Activated naive CD4-positive, alpha-beta T cell treated with anti-CD3 and anti-CD28 coated beads, Interleukin-2, amount 10 ng/mL, durations not matched to agents 7 days and 5 days (primary cell): ENCODE measurements at regions of chr1 and their contacts with region 1.

Region 1: DNA sequence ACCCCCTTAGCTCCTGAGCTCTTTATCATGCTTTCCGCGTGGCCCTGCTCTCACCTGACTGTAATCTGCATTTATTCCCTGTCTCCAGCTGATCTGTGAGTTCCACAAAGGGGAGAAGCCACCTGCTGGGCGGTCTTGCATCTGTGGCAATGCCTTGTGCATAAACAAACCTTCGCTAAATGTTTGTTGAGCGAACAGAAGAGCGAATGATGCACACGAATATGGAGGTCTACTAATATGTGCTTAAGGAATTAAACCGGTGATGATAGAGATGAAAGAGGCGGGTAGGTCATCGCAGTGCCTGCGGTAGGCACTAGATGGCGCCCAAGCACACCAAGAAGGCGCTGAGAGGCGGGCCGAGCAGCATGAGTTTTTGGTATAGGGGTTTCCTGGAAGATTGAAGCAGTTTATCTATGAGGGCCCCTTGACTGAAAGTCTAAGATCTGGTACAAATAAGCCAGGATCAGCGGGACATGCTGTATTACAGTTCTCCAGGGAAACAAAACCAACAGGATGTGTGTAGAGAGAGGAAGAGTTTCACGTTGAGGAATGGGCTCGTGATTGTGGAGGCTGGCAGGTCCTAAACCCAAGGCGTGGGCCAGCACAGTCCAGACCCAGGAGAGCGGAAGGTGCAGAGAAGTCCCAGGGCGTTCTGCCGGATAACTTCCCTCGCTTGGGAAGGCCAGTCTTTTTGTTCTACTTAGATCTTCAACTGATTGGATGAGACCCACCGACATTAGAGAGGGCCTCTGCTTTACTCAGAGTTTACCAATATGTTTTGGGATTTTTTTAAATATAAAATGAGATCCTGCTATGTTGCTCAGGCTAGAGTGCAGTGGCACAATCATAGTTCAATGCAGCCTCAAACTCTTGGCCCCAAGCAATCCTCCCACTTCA is 34.7 kb downstream of the TOMM20 start:
- DNase-seq: peak; percentile 88
- H3K4me3 Mint-ChIP-seq: no peak overlapping the region
- H3K27ac Mint-ChIP-seq: no peak overlapping the region
- H3K4me1 Mint-ChIP-seq: peaks cover 7% of the 10 kb centered on the region
- H3K27me3 Mint-ChIP-seq: peaks cover 39% of the 10 kb centered on the region

Region 2: GRCh38 chr1:234656856-234657654 is 436.9 kb before region 1 on chr1:
- CTCF ChIA-PET with region 1: no interaction called
- DNase-seq: no peak
- H3K4me3 Mint-ChIP-seq: no peak overlapping the region
- H3K27ac Mint-ChIP-seq: no peak overlapping the region
- H3K4me1 Mint-ChIP-seq: peaks cover 5% of the 10 kb centered on the region
- H3K27me3 Mint-ChIP-seq: no peaks in the 10 kb centered on the region

Region 3: DNA sequence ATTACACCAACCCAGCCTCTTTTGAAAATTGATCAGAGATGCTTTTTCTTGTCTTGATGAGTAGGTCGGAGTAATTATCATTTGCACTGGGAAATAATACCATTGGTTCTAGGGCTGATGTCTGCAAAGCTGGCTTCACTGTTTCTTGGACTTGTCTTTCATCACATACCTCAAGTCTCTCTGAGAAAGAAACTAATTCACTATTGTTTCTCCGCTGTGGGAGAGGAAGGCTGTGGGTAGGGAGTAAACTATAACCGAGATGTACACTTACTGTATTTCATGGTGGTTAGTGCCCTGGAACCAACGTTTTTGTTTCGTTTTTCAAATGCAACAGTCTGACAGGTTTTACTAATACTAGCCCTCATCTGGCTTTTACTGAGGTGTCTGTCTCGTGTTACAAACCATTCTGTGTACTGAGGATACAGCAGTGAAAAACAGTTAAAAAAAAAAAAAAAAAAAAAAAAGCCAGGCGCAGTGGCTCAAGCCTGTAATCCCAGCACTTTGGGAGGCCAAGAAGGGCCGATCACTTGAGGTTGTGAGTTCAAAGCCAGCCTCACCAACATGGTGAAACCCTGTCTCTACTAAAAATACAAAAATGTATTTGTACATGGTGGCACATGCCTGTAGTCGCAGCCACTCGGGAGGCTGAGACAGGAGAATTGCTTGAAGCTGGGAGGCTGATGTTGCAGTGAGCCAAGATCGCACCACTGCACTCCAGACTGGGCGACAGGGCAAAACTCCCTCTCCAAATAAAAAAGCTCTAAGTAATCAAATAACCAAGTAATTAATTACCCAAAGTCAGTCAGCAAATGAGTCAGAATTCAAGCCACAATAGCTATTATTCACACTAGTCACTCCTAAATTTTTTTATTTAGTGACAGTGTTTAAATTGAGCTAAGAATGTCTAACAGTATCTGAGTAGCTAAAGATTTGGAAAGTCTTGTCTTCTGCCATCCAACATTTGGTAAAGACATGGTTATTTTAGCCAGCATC is 11.4 kb after region 1 on chr1:
- CTCF ChIA-PET with region 1: interaction called, 28 read pairs
- DNase-seq: peak; percentile 18
- H3K4me3 Mint-ChIP-seq: no peak overlapping the region
- H3K27ac Mint-ChIP-seq: peak overlapping the region; percentile 82
- H3K4me1 Mint-ChIP-seq: peaks cover 46% of the 10 kb centered on the region
- H3K27me3 Mint-ChIP-seq: peaks cover 17% of the 10 kb centered on the region